PC-9 (cell line): ENCODE measurements at regions of chr20 and their contacts with region 1.

Region 1: GRCh38 chr20:2849529-2849928 is 9.0 kb downstream of the VPS16 start:
- DNase-seq: no peak
- H3K4me3 ChIP-seq: no peak overlapping the region
- H3K27ac ChIP-seq: no peak overlapping the region
- H3K4me1 ChIP-seq: no peaks in the 10 kb centered on the region
- H3K27me3 ChIP-seq: no peaks in the 10 kb centered on the region
- CTCF ChIP-seq: no peak

Region 2: DNA sequence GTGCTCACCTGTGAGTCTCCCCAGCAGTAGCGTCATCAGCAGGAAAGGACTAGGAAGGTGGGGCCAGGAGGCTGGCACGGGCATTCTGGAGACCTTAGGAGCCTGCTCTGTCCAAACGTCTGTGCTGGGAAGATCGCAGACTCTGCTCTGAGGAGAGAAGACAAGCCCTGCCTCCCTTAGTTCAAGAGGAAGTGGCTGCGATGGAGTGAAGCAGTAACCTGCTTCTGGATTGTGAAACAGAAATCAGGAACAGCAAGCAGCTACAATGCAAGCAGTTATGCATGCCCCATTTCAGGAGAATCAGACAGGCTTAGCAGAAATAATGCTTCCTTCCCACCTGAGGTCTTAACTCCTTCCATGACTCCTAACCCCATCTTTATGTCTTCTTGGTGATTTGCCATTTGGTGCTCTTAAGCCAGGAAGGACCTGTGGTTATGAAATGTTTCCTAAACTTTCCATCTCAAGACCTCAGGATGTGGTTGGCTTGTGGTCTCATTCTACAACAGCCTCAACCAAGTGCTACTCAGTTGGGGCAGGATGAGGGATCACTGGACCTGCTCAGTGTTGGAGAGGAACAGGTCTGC is 1229.6 kb before region 1 on chr20 and contains the start of gene SIRPB1:
- CTCF ChIA-PET with region 1: no interaction called
- POLR2A ChIA-PET with region 1: no interaction called
- intact Hi-C with region 1: no loop called
- DNase-seq: peak; percentile 50 to 60
- H3K4me3 ChIP-seq: peak within 1 kb of the TSS; percentile 42; the same call in 1 of the 2 replicates
- H3K27ac ChIP-seq: peak within 1 kb of the TSS; percentile 65
- H3K4me1 ChIP-seq: peaks cover 50% of the 10 kb centered on the region
- H3K27me3 ChIP-seq: no peaks in the 10 kb centered on the region
- CTCF ChIP-seq: no peak
- total RNA-seq, gene SIRPB1: 4.1 and 7.6 TPM in 2 replicates

Region 3: DNA sequence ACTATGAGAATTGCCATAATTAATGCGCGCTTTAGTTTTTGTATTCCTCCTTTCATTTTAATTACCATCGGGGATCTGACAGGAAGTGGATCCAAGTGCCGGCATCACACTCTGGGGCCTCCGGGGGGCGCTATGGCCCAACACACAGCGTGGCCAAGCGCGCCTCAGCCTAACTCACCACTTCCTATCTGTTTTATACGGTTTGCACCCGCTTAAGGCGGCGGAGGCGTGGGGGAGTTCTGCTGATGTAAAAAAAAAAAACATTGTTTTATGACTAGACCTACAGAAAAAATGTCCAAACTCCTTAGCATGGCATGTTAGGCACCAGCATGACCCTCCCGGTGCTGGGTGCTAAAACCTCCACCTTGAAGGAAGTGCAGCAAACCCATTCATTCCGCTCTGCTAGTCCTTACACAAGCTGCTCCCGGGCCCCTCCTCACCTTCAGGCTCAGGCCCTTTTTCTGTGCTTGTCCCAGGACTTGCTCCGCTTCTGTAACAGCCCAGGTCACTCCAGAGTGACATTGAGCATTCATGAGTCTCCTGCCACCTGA is 161.4 kb before region 1 on chr20:
- CTCF ChIA-PET with region 1: no interaction called
- POLR2A ChIA-PET with region 1: no interaction called
- intact Hi-C with region 1: loop called (anchors 2 kb)
- DNase-seq: peak in 1 of 2 experiments; percentile 43
- H3K4me3 ChIP-seq: no peak overlapping the region
- H3K27ac ChIP-seq: no peak overlapping the region
- H3K4me1 ChIP-seq: no peaks in the 10 kb centered on the region
- H3K27me3 ChIP-seq: peaks cover 57% of the 10 kb centered on the region
- CTCF ChIP-seq: peak; percentile 56

Region 4: GRCh38 chr20:2713285-2713684 is 136.2 kb before region 1 on chr20:
- CTCF ChIA-PET with region 1: no interaction called
- POLR2A ChIA-PET with region 1: no interaction called
- intact Hi-C with region 1: loop called (anchors 1 kb)
- DNase-seq: no peak
- H3K4me3 ChIP-seq: no peak overlapping the region
- H3K27ac ChIP-seq: no peak overlapping the region
- H3K4me1 ChIP-seq: no peaks in the 10 kb centered on the region
- H3K27me3 ChIP-seq: peaks cover 62% of the 10 kb centered on the region
- CTCF ChIP-seq: no peak; the same call in 1 of the 2 replicates

Region 5: DNA sequence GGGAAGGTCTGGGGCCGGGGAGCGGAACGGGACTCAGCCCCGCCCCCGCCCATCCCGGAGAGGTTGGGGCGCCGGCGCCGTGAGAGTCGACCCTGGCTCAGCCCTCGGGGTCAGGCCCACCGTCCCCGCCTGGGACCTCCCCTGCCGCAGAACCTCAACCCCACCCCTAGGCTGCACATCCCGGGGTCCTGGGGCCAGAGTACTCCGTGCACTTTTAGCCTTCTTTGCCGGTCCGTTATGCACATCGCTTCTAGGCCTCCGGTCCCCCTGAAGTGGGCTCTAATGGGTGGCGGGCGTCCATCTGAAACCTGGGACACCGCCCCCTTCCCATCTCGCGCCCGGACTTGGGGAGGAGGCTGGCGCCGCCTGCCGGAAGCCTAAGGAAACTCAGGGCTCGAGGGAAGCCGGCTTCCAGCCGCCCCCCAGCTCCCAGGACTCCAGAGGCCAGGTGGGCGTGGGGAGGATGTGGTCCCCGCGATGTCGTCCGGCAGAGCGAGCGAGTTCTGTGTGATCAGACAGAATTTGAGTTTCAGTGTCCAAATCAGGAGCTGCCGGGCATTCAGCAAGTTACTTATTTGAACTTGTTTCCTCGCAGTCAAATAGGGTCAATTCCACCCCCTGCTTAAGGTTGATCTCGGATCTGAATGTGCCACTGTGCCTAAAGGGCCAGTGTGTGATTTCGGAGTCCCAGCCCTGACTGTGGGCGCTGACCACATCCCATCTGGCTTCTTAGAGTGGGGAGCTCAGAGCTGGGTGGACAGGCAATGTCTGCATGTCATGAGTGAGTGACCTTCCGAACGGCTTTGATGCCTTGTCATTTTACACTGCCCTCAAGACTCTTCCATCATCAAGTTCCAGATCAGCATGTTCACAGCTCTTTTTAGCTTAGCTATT is 96.7 kb before region 1 on chr20:
- CTCF ChIA-PET with region 1: interaction called, 7 read pairs
- POLR2A ChIA-PET with region 1: no interaction called
- intact Hi-C with region 1: loop called (anchors 1 kb)
- DNase-seq: peak in 1 of 2 experiments; percentile 42
- H3K4me3 ChIP-seq: peak overlapping the region; percentile 51; the same call in 1 of the 2 replicates
- H3K27ac ChIP-seq: no peak overlapping the region
- H3K4me1 ChIP-seq: peaks cover 7% of the 10 kb centered on the region
- H3K27me3 ChIP-seq: peaks cover 43% of the 10 kb centered on the region
- CTCF ChIP-seq: peak; percentile 82